Left colon (tissue), 2 donors: ENCODE measurements at regions of chr5 and their contacts with region 1.

Region 1: GRCh38 chr5:88680253-88681132 is 202.5 kb downstream of the MEF2C start:
- DNase-seq: peak; percentile 41 to 81
- ATAC-seq: peak; percentile 84

Region 2: GRCh38 chr5:87780831-87781760 is 899.4 kb before region 1 on chr5:
- intact Hi-C with region 1: loop called (anchors 5 to 10 kb)
- DNase-seq: peak; percentile 73 to 77
- ATAC-seq: peak; percentile 99

Region 3: GRCh38 chr5:88140856-88141752 is 539.4 kb before region 1 on chr5:
- intact Hi-C with region 1: loop called in 1 of 2 experiments (anchors 5 kb)
- DNase-seq: peak; percentile 89 to 95
- ATAC-seq: peak; percentile 98